ENCODE measurements at regions of chr10 and their contacts with region 1.

Region 1: GRCh38 chr10:32346134-32346550 is 816 bp downstream of the EPC1 start:
- DNase-seq: peak; percentile 96
- H3K4me3 ChIP-seq: peak overlapping the region; percentile 69 to 78
- H3K27ac ChIP-seq: peak overlapping the region; percentile 99 to 100
- H3K4me1 ChIP-seq: no peaks in the 10 kb centered on the region
- H3K27me3 ChIP-seq: no peaks in the 10 kb centered on the region
- CTCF ChIP-seq: peak; percentile 96 to 99 (median 98)
- POLR2A ChIP-seq: peak; percentile 40

Region 2: DNA sequence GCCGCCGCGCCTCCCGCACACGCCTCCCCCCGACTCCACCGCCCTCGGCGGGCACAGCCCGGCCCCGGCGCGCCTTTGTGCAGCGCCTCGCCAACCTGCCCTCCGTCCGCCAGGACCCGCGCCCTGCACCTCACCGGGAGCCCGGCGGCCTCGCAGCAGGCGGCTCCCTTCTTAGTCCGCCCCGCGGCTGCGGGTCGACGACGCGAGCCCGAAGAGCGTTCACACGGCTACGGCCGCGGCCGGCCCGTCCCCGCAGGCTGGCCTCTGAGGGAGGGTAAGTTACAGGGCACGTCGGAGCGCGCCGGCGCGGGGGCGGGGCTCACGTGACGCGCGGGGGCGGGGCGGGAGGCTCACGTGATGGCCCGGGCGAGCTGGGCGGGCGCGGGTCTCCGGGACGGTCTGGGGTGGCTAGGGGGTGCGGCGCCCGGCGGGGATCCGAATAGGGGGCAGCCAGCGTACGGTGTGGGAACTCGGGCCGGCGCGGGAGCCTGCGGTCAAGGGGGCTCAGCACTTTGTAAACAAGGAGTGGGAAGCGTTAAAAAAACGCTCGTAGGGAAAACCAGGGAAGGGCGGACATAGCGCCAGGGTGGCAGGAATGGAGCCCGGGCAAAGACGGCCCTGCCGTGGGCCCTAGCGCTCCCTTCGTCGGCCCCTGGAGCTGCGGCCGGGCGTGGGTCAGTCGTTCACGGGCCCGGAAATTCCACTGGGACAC is 417.4 kb before region 1 on chr10 and contains the start of gene ARHGAP12:
- intact Hi-C with region 1: loop called (anchors 5 kb)
- DNase-seq: peak; percentile 92
- H3K4me3 ChIP-seq: peak within 1 kb of the TSS; percentile 89 to 97
- H3K27ac ChIP-seq: peak within 1 kb of the TSS; percentile 97 to 98
- H3K4me1 ChIP-seq: peaks cover 3% of the 10 kb centered on the region
- H3K27me3 ChIP-seq: no peaks in the 10 kb centered on the region
- CTCF ChIP-seq: peak in 2 of 4 experiments; percentile 5 to 12
- POLR2A ChIP-seq: peak; percentile 99
- total RNA-seq, gene ARHGAP12: 34.3 to 44.9 TPM

Region 3: DNA sequence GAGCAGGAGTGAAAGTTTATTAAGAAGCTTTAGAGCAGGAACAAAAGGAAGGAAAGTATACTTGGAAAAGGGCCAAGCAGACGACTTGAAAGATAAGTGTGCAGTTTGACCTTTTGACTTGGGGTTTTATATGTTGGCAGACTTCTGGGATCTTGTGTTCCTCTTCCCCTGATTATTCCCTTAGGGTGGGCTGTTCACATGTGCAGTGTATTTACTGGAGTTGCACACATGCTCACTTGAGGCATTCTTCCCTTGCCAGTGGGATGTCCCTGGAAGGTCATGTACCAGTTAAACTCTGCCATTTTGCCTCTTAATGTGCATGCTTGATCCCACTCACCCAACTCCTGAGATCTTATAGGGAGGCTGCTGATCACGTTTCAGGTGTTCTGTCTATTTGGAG is 394.1 kb before region 1 on chr10:
- intact Hi-C with region 1: no loop called
- DNase-seq: no peak
- H3K4me3 ChIP-seq: no peak overlapping the region
- H3K27ac ChIP-seq: no peak overlapping the region
- H3K4me1 ChIP-seq: no peaks in the 10 kb centered on the region
- H3K27me3 ChIP-seq: no peaks in the 10 kb centered on the region
- CTCF ChIP-seq: no peak
- POLR2A ChIP-seq: no peak

Region 4: DNA sequence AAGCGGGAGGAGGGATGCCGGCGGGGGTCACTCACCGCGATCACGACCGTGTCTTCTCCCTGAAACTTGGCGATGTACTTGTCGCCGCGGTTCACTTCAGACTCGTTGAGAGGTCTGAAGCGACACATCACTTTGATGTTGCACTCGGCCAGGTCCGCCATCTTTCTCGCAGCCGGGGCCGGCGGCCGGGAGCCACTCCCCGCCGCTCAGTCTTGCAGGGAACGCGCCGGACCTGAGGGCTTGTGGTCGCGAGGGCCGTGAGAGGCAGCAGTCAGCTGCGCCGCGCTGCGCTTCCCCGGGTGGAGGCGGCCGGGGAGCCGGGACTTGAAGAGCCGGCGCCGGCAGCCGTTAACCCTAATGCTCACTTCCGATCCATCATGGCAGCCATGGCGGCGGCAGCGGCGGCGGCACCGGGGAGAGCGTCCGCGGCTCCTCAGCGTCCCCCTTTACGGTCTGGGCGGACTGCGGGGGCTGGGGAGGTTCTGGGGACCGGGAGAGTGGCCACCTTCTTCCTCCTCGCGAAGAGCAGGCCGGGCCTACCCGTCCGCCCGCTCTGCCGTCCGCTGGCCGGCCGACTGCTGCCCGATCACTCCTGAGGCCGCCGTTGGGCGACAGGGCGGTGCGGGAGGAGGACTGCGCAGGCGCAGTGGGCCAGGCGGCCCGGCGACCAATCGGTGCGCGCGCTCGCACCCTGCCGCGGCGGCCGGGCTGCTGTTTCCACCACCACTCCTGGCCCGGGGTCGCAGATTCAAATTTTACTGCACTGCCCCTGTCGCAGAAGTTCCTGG is 290.1 kb before region 1 on chr10 and contains the start of gene KIF5B:
- intact Hi-C with region 1: loop called (anchors 10 kb)
- DNase-seq: peak; percentile 86
- H3K4me3 ChIP-seq: peak within 1 kb of the TSS; percentile 66 to 97
- H3K27ac ChIP-seq: peak within 1 kb of the TSS; percentile 97 to 99
- H3K4me1 ChIP-seq: no peaks in the 10 kb centered on the region
- H3K27me3 ChIP-seq: no peaks in the 10 kb centered on the region
- CTCF ChIP-seq: peak in 1 of 4 experiments; percentile 8
- POLR2A ChIP-seq: peak; percentile 99
- total RNA-seq, gene KIF5B: 98.2 to 102 TPM

Region 5: GRCh38 chr10:32190890-32191491 is 155.2 kb before region 1 on chr10:
- intact Hi-C with region 1: loop called (anchors 5 kb)
- DNase-seq: no peak
- H3K4me3 ChIP-seq: no peak overlapping the region
- H3K27ac ChIP-seq: no peak overlapping the region
- H3K4me1 ChIP-seq: no peaks in the 10 kb centered on the region
- H3K27me3 ChIP-seq: no peaks in the 10 kb centered on the region
- CTCF ChIP-seq: peak; percentile 41 to 80 (median 71)
- POLR2A ChIP-seq: no peak

Region 6: DNA sequence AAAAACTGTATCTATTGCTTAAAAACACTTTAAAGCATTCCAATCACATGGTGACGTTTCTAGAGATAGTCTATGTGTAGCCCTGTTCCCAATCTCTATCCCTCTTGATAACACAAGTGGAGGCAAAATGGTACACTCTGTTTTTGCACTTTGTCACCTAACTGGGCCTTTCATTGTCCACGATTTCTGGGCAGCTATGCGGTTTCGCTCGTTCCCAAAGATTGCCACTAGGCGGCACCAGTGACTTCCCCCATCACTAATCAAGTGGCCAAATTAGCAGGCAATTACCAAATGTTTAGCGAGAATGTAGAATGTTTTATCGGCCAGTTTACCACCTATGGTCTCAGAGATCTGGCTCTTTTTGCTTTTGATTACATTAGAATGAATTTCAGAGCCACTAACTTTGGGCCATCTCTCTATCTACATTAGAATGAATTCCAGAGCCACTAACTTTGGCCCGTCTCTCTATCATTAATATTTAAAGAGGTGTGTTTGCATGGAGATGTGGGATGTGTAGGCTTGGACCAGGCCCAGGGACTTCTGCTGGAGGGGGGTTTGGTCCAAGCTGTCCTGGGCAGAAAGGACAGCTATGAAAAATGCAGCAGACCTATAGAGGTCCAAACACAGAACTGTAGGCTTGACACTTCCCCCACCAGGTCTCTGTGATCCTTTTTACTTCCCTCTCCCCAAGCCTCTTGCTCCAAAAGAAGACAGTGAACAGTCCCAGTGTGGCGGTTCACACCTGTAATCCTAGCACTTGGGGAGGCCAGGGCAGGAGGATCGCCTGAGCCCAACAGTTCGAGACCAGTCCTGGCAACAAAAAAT is 89.3 kb before region 1 on chr10:
- intact Hi-C with region 1: loop called (anchors 2 kb)
- DNase-seq: peak; percentile 54
- H3K4me3 ChIP-seq: no peak overlapping the region
- H3K27ac ChIP-seq: no peak overlapping the region
- H3K4me1 ChIP-seq: no peaks in the 10 kb centered on the region
- H3K27me3 ChIP-seq: no peaks in the 10 kb centered on the region
- CTCF ChIP-seq: peak; percentile 74 to 89 (median 82)
- POLR2A ChIP-seq: no peak

Measured in prostate gland (tissue), 2 donors.